B cell (primary cell): ENCODE measurements at regions of chr7 and their contacts with region 1.

Region 1: DNA sequence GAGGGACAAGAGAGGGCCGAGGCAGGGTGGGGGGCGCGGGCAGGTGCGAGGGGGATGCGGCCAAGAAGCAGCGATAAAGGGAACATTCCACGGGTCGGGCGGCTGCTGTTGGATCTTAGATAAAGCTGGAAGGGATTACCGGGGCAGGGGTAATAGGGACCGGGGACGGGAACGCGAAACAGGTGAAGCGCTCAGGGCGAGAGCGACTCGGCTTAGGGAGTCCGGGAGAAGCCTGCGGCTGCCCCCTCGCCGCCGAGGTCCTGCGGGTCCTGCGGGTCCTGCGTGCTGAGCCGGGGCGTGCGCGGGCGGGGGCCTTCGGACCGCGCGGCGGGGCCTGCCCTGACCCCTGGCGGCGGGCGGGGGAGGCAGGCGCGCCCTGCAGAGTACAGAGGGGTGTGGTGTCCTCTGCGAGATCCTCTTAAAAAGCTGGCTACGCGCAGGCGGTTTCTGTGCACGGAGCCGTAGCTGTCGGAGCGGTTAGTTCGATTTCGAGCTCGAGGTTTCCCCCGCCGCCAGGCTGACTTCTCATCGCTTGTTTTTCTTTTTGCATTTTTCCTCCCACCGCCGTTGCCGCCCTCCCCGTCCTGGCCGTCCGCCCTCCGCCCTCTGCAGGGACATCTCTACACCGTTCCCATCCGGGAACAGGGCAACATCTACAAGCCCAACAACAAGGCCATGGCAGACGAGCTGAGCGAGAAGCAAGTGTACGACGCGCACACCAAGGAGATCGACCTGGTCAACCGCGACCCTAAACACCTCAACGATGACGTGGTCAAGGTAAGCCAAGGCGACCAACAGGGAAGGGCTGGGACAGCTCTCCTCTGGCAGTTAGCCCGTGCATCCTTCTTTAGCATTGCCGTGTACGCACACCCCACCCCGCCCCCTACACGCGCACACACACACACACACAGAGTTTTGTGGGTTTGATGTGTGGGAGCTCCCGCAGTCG is 1.4 kb downstream of the CAV1 start:
- DNase-seq: peak; percentile 83
- ATAC-seq: peak; percentile 92
- H3K4me3 ChIP-seq: peak overlapping the region; percentile 3 to 84 (median 73)
- H3K4me3 Mint-ChIP-seq: peak overlapping the region; percentile 96
- H3K27ac ChIP-seq: no peak overlapping the region
- H3K27ac Mint-ChIP-seq: peak overlapping the region; percentile 65
- H3K4me1 ChIP-seq: peaks cover 12 to 27% of the 10 kb centered on the region in 2 donors
- H3K4me1 Mint-ChIP-seq: peaks cover 26% of the 10 kb centered on the region
- H3K27me3 ChIP-seq: peaks cover 0 to 42% (median 28%) of the 10 kb centered on the region in 4 experiments
- H3K27me3 Mint-ChIP-seq: peaks cover 46% of the 10 kb centered on the region
- CTCF ChIP-seq: peak; percentile 87

Region 2: GRCh38 chr7:116173051-116174028 is 352.8 kb before region 1 on chr7:
- CTCF ChIA-PET with region 1: interaction called, 15 read pairs
- POLR2A ChIA-PET with region 1: no interaction called
- intact Hi-C with region 1: loop called (anchors 2 kb)
- DNase-seq: peak; percentile 74
- ATAC-seq: peak; percentile 61
- H3K4me3 ChIP-seq: no peak overlapping the region
- H3K4me3 Mint-ChIP-seq: no peak overlapping the region
- H3K27ac ChIP-seq: no peak overlapping the region
- H3K27ac Mint-ChIP-seq: no peak overlapping the region
- H3K4me1 ChIP-seq: no peaks in the 10 kb centered on the region
- H3K4me1 Mint-ChIP-seq: peaks cover 2% of the 10 kb centered on the region
- H3K27me3 ChIP-seq: no peaks in the 10 kb centered on the region
- H3K27me3 Mint-ChIP-seq: no peaks in the 10 kb centered on the region
- CTCF ChIP-seq: peak; percentile 82

Region 3: DNA sequence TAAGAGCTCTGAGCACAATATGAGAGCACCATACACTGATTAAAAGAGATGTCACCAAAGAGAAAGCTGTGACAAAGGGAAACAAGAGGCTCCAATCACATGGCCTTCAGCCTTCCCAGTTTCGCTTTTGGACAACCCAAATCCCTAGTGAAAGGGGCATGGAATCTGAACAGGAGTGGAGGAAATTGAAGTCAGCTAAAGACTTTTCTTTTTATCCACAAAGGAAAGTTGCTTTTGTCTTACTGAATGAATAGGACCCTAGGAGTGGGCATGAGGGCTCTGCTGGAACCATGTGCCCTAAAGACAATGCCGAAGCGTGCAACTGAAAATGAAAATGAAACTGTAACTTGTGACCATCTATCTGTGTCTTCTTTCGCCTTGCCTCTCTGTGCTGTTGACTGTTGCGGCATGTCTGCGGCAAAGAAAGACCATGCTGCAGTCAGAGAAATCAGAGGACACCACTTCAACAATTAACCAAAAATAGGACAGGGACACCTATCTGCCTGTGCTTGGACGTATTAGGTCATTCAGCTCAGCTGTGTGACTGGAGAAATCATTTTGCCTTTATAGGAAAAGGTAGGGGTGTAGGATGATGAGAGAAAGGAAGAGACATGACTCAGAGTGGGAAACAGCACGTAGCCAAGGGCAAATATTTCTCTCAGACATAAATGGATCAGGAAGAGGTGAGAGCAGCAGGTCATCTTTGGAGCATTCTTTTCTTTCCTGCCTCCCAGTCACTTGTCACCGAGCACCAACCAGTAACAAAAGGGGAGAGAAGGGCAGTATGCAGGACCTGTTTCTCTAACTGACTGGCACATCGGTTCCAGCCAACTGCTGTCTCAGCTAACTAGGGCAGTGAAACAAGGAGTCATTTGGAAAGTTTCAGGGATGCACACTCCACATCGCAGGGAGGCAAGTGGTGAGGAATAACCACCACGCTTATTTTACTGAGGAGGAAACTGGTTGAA is 14.4 kb before region 1 on chr7:
- CTCF ChIA-PET with region 1: interaction called, 9 read pairs
- POLR2A ChIA-PET with region 1: no interaction called
- intact Hi-C with region 1: loop called (anchors 1 kb)
- DNase-seq: peak; percentile 57
- ATAC-seq: peak; percentile 94
- H3K4me3 ChIP-seq: peak overlapping the region; percentile 2 to 60 (median 40)
- H3K4me3 Mint-ChIP-seq: peak overlapping the region; percentile 90
- H3K27ac ChIP-seq: peak overlapping the region in 1 of 2 donors; percentile 12
- H3K27ac Mint-ChIP-seq: peak overlapping the region; percentile 8
- H3K4me1 ChIP-seq: peaks cover 6 to 13% of the 10 kb centered on the region in 2 donors
- H3K4me1 Mint-ChIP-seq: peaks cover 16% of the 10 kb centered on the region
- H3K27me3 ChIP-seq: peaks cover 0 to 10% (median 2%) of the 10 kb centered on the region in 4 experiments
- H3K27me3 Mint-ChIP-seq: peaks cover 17% of the 10 kb centered on the region
- CTCF ChIP-seq: no peak

Region 4: GRCh38 chr7:116582806-116583444 is 56.7 kb after region 1 on chr7:
- CTCF ChIA-PET with region 1: interaction called, 10 read pairs
- POLR2A ChIA-PET with region 1: no interaction called
- intact Hi-C with region 1: loop called (anchors 2 kb)
- DNase-seq: no peak
- ATAC-seq: no peak
- H3K4me3 ChIP-seq: peak overlapping the region in 2 of 5 experiments; percentile 9 to 36
- H3K4me3 Mint-ChIP-seq: peak overlapping the region; percentile 72
- H3K27ac ChIP-seq: peak overlapping the region in 1 of 2 donors; percentile 32
- H3K27ac Mint-ChIP-seq: peak overlapping the region; percentile 18
- H3K4me1 ChIP-seq: peaks cover 13 to 16% of the 10 kb centered on the region in 2 donors
- H3K4me1 Mint-ChIP-seq: peaks cover 16% of the 10 kb centered on the region
- H3K27me3 ChIP-seq: no peaks in the 10 kb centered on the region
- H3K27me3 Mint-ChIP-seq: no peaks in the 10 kb centered on the region
- CTCF ChIP-seq: no peak

Region 5: GRCh38 chr7:116706668-116707126 is 180.5 kb after region 1 on chr7:
- CTCF ChIA-PET with region 1: no interaction called
- POLR2A ChIA-PET with region 1: no interaction called
- intact Hi-C with region 1: no loop called
- DNase-seq: no peak
- ATAC-seq: no peak
- H3K4me3 ChIP-seq: no peak overlapping the region
- H3K4me3 Mint-ChIP-seq: no peak overlapping the region
- H3K27ac ChIP-seq: no peak overlapping the region
- H3K27ac Mint-ChIP-seq: no peak overlapping the region
- H3K4me1 ChIP-seq: no peaks in the 10 kb centered on the region
- H3K4me1 Mint-ChIP-seq: no peaks in the 10 kb centered on the region
- H3K27me3 ChIP-seq: peaks cover 0 to 27% (median 1%) of the 10 kb centered on the region in 4 experiments
- H3K27me3 Mint-ChIP-seq: peaks cover 26% of the 10 kb centered on the region
- CTCF ChIP-seq: no peak